ENCODE measurements at regions of chr11 and their contacts with region 1.

Region 1: GRCh38 chr11:75388386-75389275 is 10.7 kb upstream of the RPS3 start:
- DNase-seq: peak; percentile 82
- H3K4me3 Mint-ChIP-seq: no peak overlapping the region
- H3K27ac Mint-ChIP-seq: no peak overlapping the region
- H3K4me1 Mint-ChIP-seq: peaks cover 12% of the 10 kb centered on the region
- H3K27me3 Mint-ChIP-seq: peaks cover 29% of the 10 kb centered on the region

Region 2: GRCh38 chr11:75280227-75280701 is 108.4 kb before region 1 on chr11:
- CTCF ChIA-PET with region 1: interaction called, 389 read pairs
- DNase-seq: peak; percentile 85
- H3K4me3 Mint-ChIP-seq: no peak overlapping the region
- H3K27ac Mint-ChIP-seq: no peak overlapping the region
- H3K4me1 Mint-ChIP-seq: peaks cover 38% of the 10 kb centered on the region
- H3K27me3 Mint-ChIP-seq: no peaks in the 10 kb centered on the region

Region 3: GRCh38 chr11:75328426-75329277 is 60.0 kb before region 1 on chr11:
- CTCF ChIA-PET with region 1: interaction called, 53 read pairs
- DNase-seq: peak; percentile 81
- H3K4me3 Mint-ChIP-seq: no peak overlapping the region
- H3K27ac Mint-ChIP-seq: peak overlapping the region; percentile 91
- H3K4me1 Mint-ChIP-seq: peaks cover 70% of the 10 kb centered on the region
- H3K27me3 Mint-ChIP-seq: no peaks in the 10 kb centered on the region

Region 4: DNA sequence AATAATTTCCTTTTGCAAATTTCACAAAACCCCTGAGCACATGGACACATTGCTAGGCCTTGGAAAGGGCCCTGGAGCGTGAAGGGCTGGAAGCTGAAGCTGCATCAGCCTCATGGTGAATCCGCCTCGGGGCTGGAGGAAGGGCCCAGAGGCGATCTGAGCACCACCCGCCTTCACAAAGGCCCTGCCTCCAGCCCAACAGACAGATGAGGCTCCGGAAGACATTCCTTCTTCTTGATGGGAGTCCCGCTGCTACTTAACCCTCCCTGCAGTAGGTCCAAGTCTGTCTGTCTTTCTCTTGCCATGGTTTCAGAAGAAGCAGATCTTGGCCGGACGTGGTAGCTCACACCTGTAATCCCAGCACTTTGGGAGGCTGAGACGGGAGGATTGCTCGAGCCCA is 53.7 kb before region 1 on chr11:
- CTCF ChIA-PET with region 1: interaction called, 57 read pairs
- DNase-seq: no peak
- H3K4me3 Mint-ChIP-seq: no peak overlapping the region
- H3K27ac Mint-ChIP-seq: no peak overlapping the region
- H3K4me1 Mint-ChIP-seq: peaks cover 56% of the 10 kb centered on the region
- H3K27me3 Mint-ChIP-seq: no peaks in the 10 kb centered on the region

Region 5: GRCh38 chr11:75342903-75343870 is 45.4 kb before region 1 on chr11:
- CTCF ChIA-PET with region 1: interaction called, 57 read pairs
- DNase-seq: no peak
- H3K4me3 Mint-ChIP-seq: no peak overlapping the region
- H3K27ac Mint-ChIP-seq: no peak overlapping the region
- H3K4me1 Mint-ChIP-seq: peaks cover 79% of the 10 kb centered on the region
- H3K27me3 Mint-ChIP-seq: no peaks in the 10 kb centered on the region

Region 6: GRCh38 chr11:75445315-75445953 is 56.8 kb after region 1 on chr11:
- CTCF ChIA-PET with region 1: interaction called, 19 read pairs
- DNase-seq: peak; percentile 82
- H3K4me3 Mint-ChIP-seq: no peak overlapping the region
- H3K27ac Mint-ChIP-seq: no peak overlapping the region
- H3K4me1 Mint-ChIP-seq: no peaks in the 10 kb centered on the region
- H3K27me3 Mint-ChIP-seq: peaks cover 10% of the 10 kb centered on the region

Region 7: GRCh38 chr11:75532200-75533048 is 143.8 kb after region 1 on chr11:
- CTCF ChIA-PET with region 1: interaction called, 69 read pairs
- DNase-seq: peak; percentile 89
- H3K4me3 Mint-ChIP-seq: no peak overlapping the region
- H3K27ac Mint-ChIP-seq: peak overlapping the region; percentile 19
- H3K4me1 Mint-ChIP-seq: peaks cover 64% of the 10 kb centered on the region
- H3K27me3 Mint-ChIP-seq: peaks cover 26% of the 10 kb centered on the region

Region 8: GRCh38 chr11:75677275-75677674 is 288.6 kb after region 1 on chr11:
- CTCF ChIA-PET with region 1: no interaction called
- DNase-seq: no peak
- H3K4me3 Mint-ChIP-seq: no peak overlapping the region
- H3K27ac Mint-ChIP-seq: no peak overlapping the region
- H3K4me1 Mint-ChIP-seq: peaks cover 26% of the 10 kb centered on the region
- H3K27me3 Mint-ChIP-seq: peaks cover 39% of the 10 kb centered on the region